Psoas muscle (tissue), 8 donors: ENCODE measurements at regions of chr9 and their contacts with region 1.

Region 1: GRCh38 chr9:103078581-103078980 is 83.4 kb downstream of the CYLC2 start:
- DNase-seq: no peak
- ATAC-seq: no peak
- H3K4me3 ChIP-seq: no peak overlapping the region
- H3K27ac ChIP-seq: no peak overlapping the region
- H3K4me1 ChIP-seq: no peaks in the 10 kb centered on the region
- H3K27me3 ChIP-seq: no peaks in the 10 kb centered on the region
- CTCF ChIP-seq: no peak

Region 2: GRCh38 chr9:102362470-102363132 is 716.0 kb before region 1 on chr9:
- intact Hi-C with region 1: loop called in 1 of 2 experiments (anchors 10 kb)
- DNase-seq: no peak
- ATAC-seq: no peak
- H3K4me3 ChIP-seq: no peak overlapping the region
- H3K27ac ChIP-seq: no peak overlapping the region
- H3K4me1 ChIP-seq: no peaks in the 10 kb centered on the region
- H3K27me3 ChIP-seq: no peaks in the 10 kb centered on the region
- CTCF ChIP-seq: no peak